Esophagus muscularis mucosa (tissue), 4 donors: ENCODE measurements at regions of chr1 and their contacts with region 1.

Region 1: GRCh38 chr1:67535474-67535873 is 105.3 kb upstream of the SERBP1 start:
- DNase-seq: peak; percentile 94
- H3K4me3 ChIP-seq: no peak overlapping the region
- H3K27ac ChIP-seq: no peak overlapping the region
- H3K4me1 ChIP-seq: peaks cover 0 to 9% (median 6%) of the 10 kb centered on the region in 4 donors
- H3K27me3 ChIP-seq: no peaks in the 10 kb centered on the region
- CTCF ChIP-seq: peak; percentile 73 to 82 (median 78)
- EP300 ChIP-seq: no peak
- POLR2A ChIP-seq: no peak

Region 2: GRCh38 chr1:67629370-67630075 is 94.0 kb after region 1 on chr1:
- intact Hi-C with region 1: no loop called
- DNase-seq: no peak
- H3K4me3 ChIP-seq: no peak overlapping the region
- H3K27ac ChIP-seq: no peak overlapping the region
- H3K4me1 ChIP-seq: peaks cover 8 to 20% (median 14%) of the 10 kb centered on the region in 4 donors
- H3K27me3 ChIP-seq: no peaks in the 10 kb centered on the region
- CTCF ChIP-seq: no peak
- EP300 ChIP-seq: no peak
- POLR2A ChIP-seq: no peak

Region 3: DNA sequence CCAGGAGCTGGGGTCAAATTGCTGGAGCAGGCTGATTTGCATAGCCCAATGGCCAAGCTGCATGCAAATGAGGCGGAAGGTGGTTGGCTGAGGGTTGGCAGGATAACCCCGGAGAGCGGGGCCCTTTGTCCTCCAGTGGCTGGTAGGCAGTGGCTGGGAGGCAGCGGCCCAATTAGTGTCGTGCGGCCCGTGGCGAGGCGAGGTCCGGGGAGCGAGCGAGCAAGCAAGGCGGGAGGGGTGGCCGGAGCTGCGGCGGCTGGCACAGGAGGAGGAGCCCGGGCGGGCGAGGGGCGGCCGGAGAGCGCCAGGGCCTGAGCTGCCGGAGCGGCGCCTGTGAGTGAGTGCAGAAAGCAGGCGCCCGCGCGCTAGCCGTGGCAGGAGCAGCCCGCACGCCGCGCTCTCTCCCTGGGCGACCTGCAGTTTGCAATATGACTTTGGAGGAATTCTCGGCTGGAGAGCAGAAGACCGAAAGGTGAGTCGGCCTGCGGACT is 149.6 kb after region 1 on chr1 and contains the start of gene GADD45A:
- intact Hi-C with region 1: loop called (anchors 5 kb)
- DNase-seq: peak; percentile 100
- H3K4me3 ChIP-seq: peak within 1 kb of the TSS; percentile 82 to 95 (median 90)
- H3K27ac ChIP-seq: peak within 1 kb of the TSS; percentile 93 to 98 (median 96)
- H3K4me1 ChIP-seq: peaks cover 23 to 37% (median 35%) of the 10 kb centered on the region in 4 donors
- H3K27me3 ChIP-seq: no peaks in the 10 kb centered on the region
- CTCF ChIP-seq: peak in 1 of 3 experiments; percentile 1
- EP300 ChIP-seq: no peak
- POLR2A ChIP-seq: peak; percentile 91
- total RNA-seq, gene GADD45A: 51.1 to 80.8 (median 66.5) TPM

Region 4: DNA sequence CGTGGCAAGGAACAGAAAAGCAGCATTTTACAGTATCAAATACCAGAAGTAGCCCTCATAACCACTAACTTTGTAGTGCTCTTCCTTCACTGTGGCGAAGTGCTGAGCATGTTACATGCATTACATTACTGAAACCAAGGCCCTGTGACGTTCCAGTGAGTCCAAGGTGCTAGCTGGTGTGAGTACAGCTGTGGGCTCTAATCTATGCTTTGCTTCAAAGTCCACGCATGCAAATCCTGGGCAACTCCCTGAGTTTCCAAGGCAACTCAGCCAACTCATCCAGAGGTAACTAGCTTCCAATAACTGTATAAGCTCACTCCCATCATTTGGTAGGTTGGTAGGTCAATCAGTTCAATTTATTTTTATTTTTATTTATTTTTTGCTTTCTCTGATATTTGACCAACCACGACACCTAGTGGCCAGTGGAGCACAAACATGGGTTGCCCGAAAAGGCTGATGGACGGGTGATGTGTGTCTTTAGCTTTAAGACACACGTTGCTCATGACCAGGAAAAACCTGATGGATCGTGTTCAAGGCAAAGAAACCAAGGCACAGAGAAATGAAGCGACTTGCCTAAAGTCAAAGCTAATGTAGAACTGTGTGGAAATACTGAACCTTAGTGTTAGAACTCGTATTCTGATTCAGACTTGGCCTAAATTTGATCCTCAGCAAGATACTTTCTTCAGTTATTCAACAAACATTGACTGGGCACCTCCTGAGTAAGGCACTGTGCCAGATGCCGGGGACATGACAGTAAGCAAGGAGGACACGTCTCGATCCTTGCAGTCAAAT is 224.8 kb after region 1 on chr1:
- intact Hi-C with region 1: loop called (anchors 2 kb)
- DNase-seq: no peak
- H3K4me3 ChIP-seq: no peak overlapping the region
- H3K27ac ChIP-seq: peak overlapping the region; percentile 19 to 64 (median 48)
- H3K4me1 ChIP-seq: peaks cover 17 to 63% (median 50%) of the 10 kb centered on the region in 4 donors
- H3K27me3 ChIP-seq: no peaks in the 10 kb centered on the region
- CTCF ChIP-seq: peak; percentile 87 to 90 (median 89)
- EP300 ChIP-seq: no peak
- POLR2A ChIP-seq: no peak

Region 5: GRCh38 chr1:67853704-67854103 is 318.2 kb after region 1 on chr1:
- intact Hi-C with region 1: loop called (anchors 10 kb)
- DNase-seq: no peak
- H3K4me3 ChIP-seq: no peak overlapping the region
- H3K27ac ChIP-seq: no peak overlapping the region
- H3K4me1 ChIP-seq: peaks cover 8 to 27% (median 17%) of the 10 kb centered on the region in 4 donors
- H3K27me3 ChIP-seq: no peaks in the 10 kb centered on the region
- CTCF ChIP-seq: peak; percentile 54 to 70 (median 56)
- EP300 ChIP-seq: no peak
- POLR2A ChIP-seq: no peak

Region 6: GRCh38 chr1:68103884-68104554 is 568.5 kb after region 1 on chr1:
- intact Hi-C with region 1: loop called (anchors 10 kb)
- DNase-seq: peak; percentile 68
- H3K4me3 ChIP-seq: no peak overlapping the region
- H3K27ac ChIP-seq: no peak overlapping the region
- H3K4me1 ChIP-seq: no peaks in the 10 kb centered on the region
- H3K27me3 ChIP-seq: no peaks in the 10 kb centered on the region
- CTCF ChIP-seq: no peak
- EP300 ChIP-seq: no peak
- POLR2A ChIP-seq: no peak

Region 7: DNA sequence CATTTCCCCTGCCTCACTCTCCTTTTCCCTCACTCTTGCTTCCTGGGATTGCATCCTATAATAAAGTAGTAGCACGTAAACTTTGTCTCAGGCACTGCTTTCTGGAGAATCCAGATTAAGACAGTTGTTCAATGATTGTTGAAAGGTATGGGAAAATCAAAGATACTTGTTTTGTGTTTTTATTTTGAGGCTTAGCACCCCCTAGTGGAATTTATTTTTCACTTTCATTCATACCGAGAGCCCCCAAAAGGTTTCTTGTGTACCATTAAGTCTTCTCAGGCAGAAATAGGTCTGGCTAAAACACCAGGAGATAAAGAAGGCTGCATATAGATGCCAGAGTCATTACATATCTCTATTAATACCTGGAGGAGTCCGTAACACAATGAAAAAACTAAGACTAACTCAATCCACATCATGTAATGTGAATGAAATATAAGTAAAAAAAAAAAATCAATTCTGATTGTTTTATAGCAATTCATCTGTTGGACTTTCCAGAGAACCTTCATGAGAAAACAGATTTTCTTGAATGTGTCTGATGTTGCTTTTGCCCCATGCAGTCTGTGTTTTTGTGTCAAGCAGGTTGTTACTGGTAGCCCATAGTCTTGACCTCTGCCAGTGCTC is 810.8 kb after region 1 on chr1:
- intact Hi-C with region 1: loop called (anchors 10 kb)
- DNase-seq: no peak
- H3K4me3 ChIP-seq: no peak overlapping the region
- H3K27ac ChIP-seq: no peak overlapping the region
- H3K4me1 ChIP-seq: peaks cover 0 to 11% (median 7%) of the 10 kb centered on the region in 4 donors
- H3K27me3 ChIP-seq: no peaks in the 10 kb centered on the region
- CTCF ChIP-seq: peak; percentile 45 to 56 (median 54)
- EP300 ChIP-seq: no peak
- POLR2A ChIP-seq: no peak